ENCODE measurements at regions of chr1 and their contacts with region 1.

Region 1: GRCh38 chr1:150173141-150173585 is 23.4 kb downstream of the PLEKHO1 start:
- DNase-seq: no peak
- ATAC-seq: no peak
- H3K4me3 ChIP-seq: no peak overlapping the region
- H3K27ac ChIP-seq: no peak overlapping the region
- H3K4me1 ChIP-seq: no peaks in the 10 kb centered on the region
- H3K27me3 ChIP-seq: no peaks in the 10 kb centered on the region
- CTCF ChIP-seq: no peak

Region 2: DNA sequence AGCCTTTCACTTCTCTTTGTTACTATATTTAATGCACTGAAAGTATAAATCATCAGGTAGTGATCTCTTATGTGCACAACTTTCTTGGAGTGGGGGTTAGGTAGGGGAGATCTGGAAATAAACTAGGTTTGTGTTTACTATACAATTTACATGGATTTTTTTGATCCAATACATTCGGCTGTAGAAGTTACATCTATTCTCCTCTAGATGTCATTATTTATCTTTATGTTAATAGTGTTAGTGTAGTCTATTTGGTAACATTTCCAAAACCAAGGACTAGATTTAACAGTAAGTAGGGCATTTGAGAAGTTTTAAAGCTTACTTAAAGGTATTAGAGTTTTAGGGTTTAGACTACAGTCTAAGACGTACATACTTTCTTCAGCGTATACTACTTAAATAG is 100.2 kb before region 1 on chr1:
- intact Hi-C with region 1: loop called (anchors 5 kb)
- DNase-seq: no peak
- ATAC-seq: no peak
- H3K4me3 ChIP-seq: no peak overlapping the region
- H3K27ac ChIP-seq: no peak overlapping the region
- H3K4me1 ChIP-seq: peaks cover 7% of the 10 kb centered on the region
- H3K27me3 ChIP-seq: no peaks in the 10 kb centered on the region
- CTCF ChIP-seq: peak; percentile 46

Measured in lower lobe of right lung (tissue), 2 donors.